Mammary epithelial cell (primary cell): ENCODE measurements at regions of chr15 and their contacts with region 1.

Region 1: GRCh38 chr15:77633134-77633912 is 611 bp upstream of the LINGO1 start:
- DNase-seq: peak; percentile 70
- H3K4me3 ChIP-seq: peak overlapping the region; percentile 7 to 43 (median 38)
- H3K27ac ChIP-seq: no peak overlapping the region
- H3K4me1 ChIP-seq: peaks cover 5% of the 10 kb centered on the region
- H3K27me3 ChIP-seq: peaks cover 9% of the 10 kb centered on the region
- CTCF ChIP-seq: peak; percentile 99 to 100

Region 2: GRCh38 chr15:77784395-77785292 is 151.3 kb after region 1 on chr15:
- CTCF ChIA-PET with region 1: no interaction called
- dilution Hi-C with region 1: no loop called
- in situ Hi-C with region 1: no loop called
- intact Hi-C with region 1: no loop called
- DNase-seq: no peak
- H3K4me3 ChIP-seq: no peak overlapping the region
- H3K27ac ChIP-seq: no peak overlapping the region
- H3K4me1 ChIP-seq: no peaks in the 10 kb centered on the region
- H3K27me3 ChIP-seq: peaks cover 3% of the 10 kb centered on the region
- CTCF ChIP-seq: peak; percentile 33 to 41

Region 3: GRCh38 chr15:77870195-77871065 is 237.1 kb after region 1 on chr15:
- CTCF ChIA-PET with region 1: interaction called, 3 read pairs
- dilution Hi-C with region 1: no loop called
- in situ Hi-C with region 1: no loop called
- intact Hi-C with region 1: loop called (anchors 1 kb)
- DNase-seq: peak; percentile 51
- H3K4me3 ChIP-seq: no peak overlapping the region
- H3K27ac ChIP-seq: no peak overlapping the region
- H3K4me1 ChIP-seq: peaks cover 8% of the 10 kb centered on the region
- H3K27me3 ChIP-seq: no peaks in the 10 kb centered on the region
- CTCF ChIP-seq: peak; percentile 64 to 77